ENCODE measurements at regions of chr2 and their contacts with region 1.

Region 1: DNA sequence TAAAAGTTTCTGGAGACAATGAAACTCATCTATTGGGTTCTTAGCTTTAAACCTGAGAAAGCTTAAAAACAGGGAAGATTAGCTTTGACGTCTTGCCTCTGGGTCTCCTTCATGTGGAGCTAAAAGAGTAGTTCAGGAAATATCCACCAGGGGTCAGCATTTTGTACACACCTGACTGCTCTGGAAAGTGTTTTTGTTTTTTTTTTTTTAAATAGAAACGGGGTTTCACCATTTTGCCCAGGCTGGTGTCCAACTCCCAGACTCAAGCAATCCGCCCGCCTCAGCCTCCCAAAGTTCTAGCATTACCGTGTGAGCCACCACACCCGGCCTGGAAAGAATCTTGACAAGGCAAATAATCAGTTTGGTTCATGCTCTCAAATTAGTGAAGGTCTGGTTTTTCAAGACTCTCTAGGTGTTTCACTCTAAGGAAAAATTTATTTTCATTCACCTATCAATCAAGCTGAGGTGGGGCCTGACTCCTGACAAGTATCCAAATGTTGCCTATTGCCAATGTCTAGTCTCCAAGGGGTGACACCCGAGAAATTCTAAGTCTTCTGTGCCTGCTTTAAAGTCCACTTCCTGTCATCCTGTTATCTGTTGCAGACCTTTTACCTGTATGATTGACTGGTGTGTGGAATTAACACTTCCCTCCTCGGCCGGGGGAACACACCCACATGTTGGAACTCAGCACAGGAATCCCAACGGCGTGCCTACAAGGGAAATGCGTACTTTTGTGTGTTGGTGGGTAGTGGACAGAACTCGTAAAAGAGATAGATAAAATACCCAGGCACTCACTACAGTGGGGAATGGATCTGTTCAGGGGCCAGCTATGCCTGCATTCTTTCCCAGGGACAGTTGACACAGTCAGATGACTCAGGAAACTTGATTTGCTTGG is 11.3 kb downstream of the IL1RN start:
- DNase-seq: peak; percentile 85
- H3K4me3 Mint-ChIP-seq: no peak overlapping the region
- H3K27ac Mint-ChIP-seq: no peak overlapping the region
- H3K4me1 Mint-ChIP-seq: peaks cover 6% of the 10 kb centered on the region
- H3K27me3 Mint-ChIP-seq: no peaks in the 10 kb centered on the region
- CTCF ChIP-seq: peak; percentile 74

Region 2: DNA sequence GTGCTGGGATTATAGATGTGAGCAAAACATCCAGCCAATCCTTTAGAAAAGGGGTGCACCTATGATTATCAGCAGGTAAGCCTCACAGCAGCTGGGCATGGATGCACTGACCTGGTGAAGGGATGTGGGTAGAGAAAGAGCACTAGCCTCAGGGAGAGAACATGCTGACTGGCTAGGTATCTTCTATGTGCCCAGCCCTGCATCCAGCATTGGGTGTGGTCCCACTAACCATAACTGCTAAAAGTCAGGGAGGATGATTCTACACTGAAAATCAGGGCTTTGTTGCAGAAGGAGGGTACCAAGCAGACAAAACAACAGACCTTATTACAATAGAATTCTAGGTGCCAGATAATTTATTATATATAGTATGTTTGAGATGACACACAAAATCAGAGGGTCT is 684.1 kb before region 1 on chr2:
- CTCF ChIA-PET with region 1: no interaction called
- POLR2A ChIA-PET with region 1: no interaction called
- intact Hi-C with region 1: no loop called
- DNase-seq: no peak
- H3K4me3 Mint-ChIP-seq: no peak overlapping the region
- H3K27ac Mint-ChIP-seq: no peak overlapping the region
- H3K4me1 Mint-ChIP-seq: no peaks in the 10 kb centered on the region
- H3K27me3 Mint-ChIP-seq: no peaks in the 10 kb centered on the region
- CTCF ChIP-seq: no peak

Region 3: GRCh38 chr2:113089916-113090315 is 48.8 kb before region 1 on chr2:
- CTCF ChIA-PET with region 1: interaction called, 198 read pairs
- POLR2A ChIA-PET with region 1: interaction called, 5 read pairs
- intact Hi-C with region 1: no loop called
- DNase-seq: no peak
- H3K4me3 Mint-ChIP-seq: no peak overlapping the region
- H3K27ac Mint-ChIP-seq: no peak overlapping the region
- H3K4me1 Mint-ChIP-seq: peaks cover 9% of the 10 kb centered on the region
- H3K27me3 Mint-ChIP-seq: peaks cover 4% of the 10 kb centered on the region
- CTCF ChIP-seq: no peak

Region 4: DNA sequence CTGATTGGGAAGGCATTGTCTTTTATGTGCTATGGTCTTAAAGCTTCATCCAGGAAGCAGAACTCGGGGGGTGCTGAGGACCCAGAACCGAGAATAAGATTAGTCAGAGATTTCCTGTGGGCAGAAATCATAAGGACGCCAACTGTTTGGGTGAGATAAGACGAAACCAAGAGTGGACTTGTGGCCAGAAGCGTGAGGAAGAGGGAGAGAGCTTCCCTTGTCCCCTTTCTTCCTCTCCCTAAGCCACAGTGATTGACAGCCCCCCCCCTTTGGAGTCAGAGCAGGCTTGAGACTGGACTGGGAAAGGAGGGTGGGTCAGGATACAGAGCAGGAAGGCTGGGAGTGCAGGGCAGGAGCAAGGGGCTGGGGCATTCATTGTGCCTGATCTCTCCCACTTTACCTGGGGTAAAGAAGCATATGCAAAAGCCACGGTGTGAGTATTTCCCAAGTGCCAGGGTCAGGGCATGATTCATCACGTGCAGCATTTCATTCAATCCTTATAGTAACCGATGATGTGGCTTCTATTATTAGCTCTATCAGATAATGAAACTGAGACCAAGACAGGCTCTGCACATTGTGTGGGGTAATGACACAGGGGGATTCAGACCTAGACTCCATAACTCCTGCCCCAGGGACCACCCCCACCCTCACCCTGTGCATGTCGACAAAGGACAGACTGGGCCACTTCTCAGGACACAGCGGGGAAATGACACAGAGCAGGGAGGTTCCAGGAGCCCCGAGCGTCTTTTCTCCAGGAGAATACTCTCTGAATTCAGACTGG is 14.3 kb before region 1 on chr2:
- CTCF ChIA-PET with region 1: interaction called, 69 read pairs
- POLR2A ChIA-PET with region 1: interaction called, 3 read pairs
- intact Hi-C with region 1: no loop called
- DNase-seq: peak; percentile 66
- H3K4me3 Mint-ChIP-seq: no peak overlapping the region
- H3K27ac Mint-ChIP-seq: no peak overlapping the region
- H3K4me1 Mint-ChIP-seq: peaks cover 15% of the 10 kb centered on the region
- H3K27me3 Mint-ChIP-seq: no peaks in the 10 kb centered on the region
- CTCF ChIP-seq: no peak

Region 5: DNA sequence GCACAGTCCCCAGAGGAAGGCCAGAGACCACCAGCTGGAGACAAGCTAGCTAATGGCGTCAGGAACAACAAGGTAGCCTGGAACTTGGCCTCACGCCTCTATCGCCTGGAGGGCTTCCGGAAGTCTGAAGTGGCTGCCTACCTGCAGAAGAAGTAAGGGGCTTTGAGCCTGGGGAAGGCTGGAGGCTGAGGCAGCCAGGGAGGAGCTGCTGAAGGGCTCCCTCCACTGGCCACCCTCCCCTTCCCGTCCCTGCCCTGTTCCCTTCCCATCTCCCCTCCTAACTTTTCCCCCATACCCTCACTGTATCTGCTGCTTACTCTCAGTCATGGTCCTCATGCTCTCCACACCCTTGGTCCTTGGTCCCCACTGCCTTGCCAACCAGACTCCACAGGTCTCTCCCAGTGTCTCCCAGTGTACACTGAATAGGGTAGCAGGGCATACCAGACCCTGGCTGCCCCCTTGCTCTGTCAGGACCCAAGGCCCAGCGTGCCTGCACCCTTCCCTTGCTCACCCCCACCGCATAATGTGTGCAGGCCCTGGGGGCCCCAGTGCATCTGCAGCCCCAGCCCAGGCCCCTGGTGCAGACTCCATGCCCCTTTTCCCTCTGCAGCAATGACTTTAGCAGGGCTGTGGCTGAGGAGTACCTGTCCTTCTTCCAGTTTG is 53.9 kb after region 1 on chr2:
- CTCF ChIA-PET with region 1: interaction called, 179 read pairs
- POLR2A ChIA-PET with region 1: no interaction called
- intact Hi-C with region 1: no loop called
- DNase-seq: no peak
- H3K4me3 Mint-ChIP-seq: no peak overlapping the region
- H3K27ac Mint-ChIP-seq: no peak overlapping the region
- H3K4me1 Mint-ChIP-seq: no peaks in the 10 kb centered on the region
- H3K27me3 Mint-ChIP-seq: no peaks in the 10 kb centered on the region
- CTCF ChIP-seq: no peak

Region 6: GRCh38 chr2:113211226-113212105 is 72.8 kb after region 1 on chr2:
- CTCF ChIA-PET with region 1: interaction called, 11 read pairs
- POLR2A ChIA-PET with region 1: no interaction called
- intact Hi-C with region 1: no loop called
- DNase-seq: peak; percentile 78
- H3K4me3 Mint-ChIP-seq: no peak overlapping the region
- H3K27ac Mint-ChIP-seq: peak overlapping the region; percentile 92
- H3K4me1 Mint-ChIP-seq: peaks cover 30% of the 10 kb centered on the region
- H3K27me3 Mint-ChIP-seq: no peaks in the 10 kb centered on the region
- CTCF ChIP-seq: no peak

Region 7: DNA sequence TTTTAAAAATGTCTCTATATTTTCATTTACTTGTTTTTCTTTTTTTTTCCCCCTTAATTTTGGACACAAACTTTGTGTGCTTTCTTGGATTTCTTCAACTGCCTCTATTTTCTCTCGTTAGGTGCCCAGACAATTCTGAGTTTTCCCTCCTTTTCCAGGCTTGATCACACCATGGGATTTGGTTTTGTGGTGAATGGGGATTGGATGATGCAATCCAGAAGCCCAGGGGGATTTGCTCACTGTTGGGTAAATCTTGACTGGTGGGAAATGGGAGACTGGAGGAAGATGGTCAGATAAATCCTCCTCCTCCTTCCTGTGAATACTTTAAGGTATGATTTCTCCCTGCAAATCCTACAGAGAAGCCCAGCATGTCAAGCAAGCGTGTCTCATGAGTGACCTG is 159.5 kb after region 1 on chr2:
- CTCF ChIA-PET with region 1: interaction called, 11 read pairs
- POLR2A ChIA-PET with region 1: no interaction called
- intact Hi-C with region 1: no loop called
- DNase-seq: no peak
- H3K4me3 Mint-ChIP-seq: no peak overlapping the region
- H3K27ac Mint-ChIP-seq: no peak overlapping the region
- H3K4me1 Mint-ChIP-seq: no peaks in the 10 kb centered on the region
- H3K27me3 Mint-ChIP-seq: no peaks in the 10 kb centered on the region
- CTCF ChIP-seq: no peak